CD8-positive, alpha-beta T cell (primary cell): ENCODE measurements at regions of chr9 and their contacts with region 1.

Region 1: GRCh38 chr9:83334320-83334719 is 203.9 kb downstream of the FRMD3 start:
- DNase-seq: peak; percentile 33 to 72 (median 57)
- ATAC-seq: peak; percentile 23
- H3K4me3 ChIP-seq: no peak overlapping the region
- H3K4me3 Mint-ChIP-seq: no peak overlapping the region
- H3K27ac ChIP-seq: no peak overlapping the region
- H3K27ac Mint-ChIP-seq: no peak overlapping the region
- H3K4me1 ChIP-seq: no peaks in the 10 kb centered on the region
- H3K4me1 Mint-ChIP-seq: no peaks in the 10 kb centered on the region
- H3K27me3 ChIP-seq: no peaks in the 10 kb centered on the region
- H3K27me3 Mint-ChIP-seq: no peaks in the 10 kb centered on the region
- CTCF ChIP-seq: peak; percentile 70

Region 2: GRCh38 chr9:83166369-83166768 is 168.0 kb before region 1 on chr9:
- CTCF ChIA-PET with region 1: no interaction called
- POLR2A ChIA-PET with region 1: no interaction called
- intact Hi-C with region 1: no loop called
- DNase-seq: no peak
- ATAC-seq: no peak
- H3K4me3 ChIP-seq: no peak overlapping the region
- H3K4me3 Mint-ChIP-seq: no peak overlapping the region
- H3K27ac ChIP-seq: no peak overlapping the region
- H3K27ac Mint-ChIP-seq: no peak overlapping the region
- H3K4me1 ChIP-seq: no peaks in the 10 kb centered on the region
- H3K4me1 Mint-ChIP-seq: no peaks in the 10 kb centered on the region
- H3K27me3 ChIP-seq: no peaks in the 10 kb centered on the region
- H3K27me3 Mint-ChIP-seq: no peaks in the 10 kb centered on the region
- CTCF ChIP-seq: no peak

Region 3: DNA sequence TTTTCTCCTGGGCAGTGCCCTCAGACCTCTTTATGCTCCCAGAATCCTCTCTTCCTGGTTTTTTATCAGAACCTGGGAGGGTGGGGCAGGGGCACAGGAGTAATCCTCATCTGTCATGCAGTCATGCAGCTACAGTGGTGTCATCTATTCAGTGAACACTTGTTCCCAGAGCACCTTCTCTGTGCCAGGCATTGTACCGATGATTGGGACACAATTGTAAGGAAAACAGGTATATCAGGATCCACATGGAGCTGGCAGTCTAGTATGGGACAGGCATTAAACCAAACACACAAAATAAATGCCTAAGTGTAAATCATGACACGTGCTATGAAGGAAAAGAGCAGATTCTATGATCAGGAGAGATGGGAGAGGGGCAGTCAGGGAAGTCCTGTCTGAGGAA is 267.1 kb after region 1 on chr9:
- CTCF ChIA-PET with region 1: interaction called, 5 read pairs
- POLR2A ChIA-PET with region 1: no interaction called
- intact Hi-C with region 1: loop called in 1 of 2 experiments (anchors 5 kb)
- DNase-seq: no peak
- ATAC-seq: no peak
- H3K4me3 ChIP-seq: no peak overlapping the region
- H3K4me3 Mint-ChIP-seq: no peak overlapping the region
- H3K27ac ChIP-seq: no peak overlapping the region
- H3K27ac Mint-ChIP-seq: no peak overlapping the region
- H3K4me1 ChIP-seq: no peaks in the 10 kb centered on the region
- H3K4me1 Mint-ChIP-seq: no peaks in the 10 kb centered on the region
- H3K27me3 ChIP-seq: no peaks in the 10 kb centered on the region
- H3K27me3 Mint-ChIP-seq: no peaks in the 10 kb centered on the region
- CTCF ChIP-seq: no peak

Region 4: GRCh38 chr9:84461540-84461939 is 1127.2 kb after region 1 on chr9:
- CTCF ChIA-PET with region 1: no interaction called
- POLR2A ChIA-PET with region 1: no interaction called
- intact Hi-C with region 1: no loop called
- DNase-seq: no peak
- ATAC-seq: no peak
- H3K4me3 ChIP-seq: no peak overlapping the region
- H3K4me3 Mint-ChIP-seq: no peak overlapping the region
- H3K27ac ChIP-seq: no peak overlapping the region
- H3K27ac Mint-ChIP-seq: no peak overlapping the region
- H3K4me1 ChIP-seq: no peaks in the 10 kb centered on the region
- H3K4me1 Mint-ChIP-seq: no peaks in the 10 kb centered on the region
- H3K27me3 ChIP-seq: no peaks in the 10 kb centered on the region
- H3K27me3 Mint-ChIP-seq: no peaks in the 10 kb centered on the region
- CTCF ChIP-seq: no peak